ENCODE measurements at regions of chr5 and their contacts with region 1.

Region 1: GRCh38 chr5:138503487-138504270 is 38.4 kb downstream of the EGR1 start:
- DNase-seq: no peak
- H3K4me3 ChIP-seq: no peak overlapping the region
- H3K27me3 ChIP-seq: no peaks in the 10 kb centered on the region
- CTCF ChIP-seq: peak; percentile 79

Region 2: DNA sequence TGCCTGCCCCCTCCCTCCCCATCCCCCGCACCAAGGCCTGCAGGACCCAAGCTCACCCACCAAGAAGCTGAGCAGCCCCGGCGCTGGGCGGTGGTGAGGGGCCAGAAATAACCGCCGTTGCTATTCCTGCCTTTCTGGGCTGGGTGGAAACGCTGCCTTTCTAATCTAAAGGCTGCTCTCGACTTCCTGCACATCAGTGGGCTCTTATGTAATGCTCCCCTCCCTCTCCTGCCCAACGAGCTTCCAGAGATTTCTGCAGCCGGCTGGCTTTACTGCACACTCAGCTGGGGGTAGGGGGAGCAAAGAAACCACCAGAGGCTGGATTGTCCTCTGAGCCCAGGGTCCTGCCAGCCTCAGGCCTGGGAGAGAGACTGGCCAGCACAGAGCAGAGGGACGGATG is 45.3 kb before region 1 on chr5:
- CTCF ChIA-PET with region 1: interaction called, 123 read pairs
- POLR2A ChIA-PET with region 1: no interaction called
- DNase-seq: no peak
- H3K4me3 ChIP-seq: no peak overlapping the region
- H3K27me3 ChIP-seq: no peaks in the 10 kb centered on the region
- CTCF ChIP-seq: no peak

Region 3: DNA sequence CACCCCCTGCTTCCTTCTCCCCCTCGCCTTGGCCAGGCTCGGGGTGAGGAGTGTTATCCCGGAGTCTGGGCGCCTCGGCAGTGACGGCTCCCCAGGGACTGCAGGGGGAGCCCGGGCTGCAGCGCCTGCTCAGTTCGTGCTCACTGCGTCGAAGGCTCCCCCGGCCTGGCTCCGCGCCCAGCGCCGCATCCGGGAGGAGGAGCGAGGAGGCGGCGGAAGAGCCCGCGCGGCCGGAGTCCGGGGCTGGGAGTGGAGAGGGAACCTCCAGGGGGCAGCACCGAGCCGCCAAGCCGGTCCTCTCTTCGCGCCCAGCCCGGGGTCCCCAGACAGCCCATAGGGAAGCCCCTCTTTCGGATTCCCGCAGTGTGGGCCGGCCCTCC is 39.7 kb before region 1 on chr5:
- CTCF ChIA-PET with region 1: interaction called, 99 read pairs
- POLR2A ChIA-PET with region 1: no interaction called
- DNase-seq: peak; percentile 71
- H3K4me3 ChIP-seq: peak overlapping the region; percentile 84
- H3K27me3 ChIP-seq: no peaks in the 10 kb centered on the region
- CTCF ChIP-seq: peak; percentile 79

Region 4: GRCh38 chr5:138491669-138492559 is 11.8 kb before region 1 on chr5:
- CTCF ChIA-PET with region 1: interaction called, 41 read pairs
- POLR2A ChIA-PET with region 1: no interaction called
- DNase-seq: peak; percentile 61
- H3K4me3 ChIP-seq: peak overlapping the region; percentile 55
- H3K27me3 ChIP-seq: no peaks in the 10 kb centered on the region; the same call in 1 of the 2 replicates
- CTCF ChIP-seq: no peak

Region 5: GRCh38 chr5:138528208-138528607 is 24.5 kb after region 1 on chr5:
- CTCF ChIA-PET with region 1: interaction called, 11 read pairs
- POLR2A ChIA-PET with region 1: interaction called, 6 read pairs
- DNase-seq: no peak
- H3K4me3 ChIP-seq: no peak overlapping the region
- H3K27me3 ChIP-seq: no peaks in the 10 kb centered on the region
- CTCF ChIP-seq: no peak

Region 6: DNA sequence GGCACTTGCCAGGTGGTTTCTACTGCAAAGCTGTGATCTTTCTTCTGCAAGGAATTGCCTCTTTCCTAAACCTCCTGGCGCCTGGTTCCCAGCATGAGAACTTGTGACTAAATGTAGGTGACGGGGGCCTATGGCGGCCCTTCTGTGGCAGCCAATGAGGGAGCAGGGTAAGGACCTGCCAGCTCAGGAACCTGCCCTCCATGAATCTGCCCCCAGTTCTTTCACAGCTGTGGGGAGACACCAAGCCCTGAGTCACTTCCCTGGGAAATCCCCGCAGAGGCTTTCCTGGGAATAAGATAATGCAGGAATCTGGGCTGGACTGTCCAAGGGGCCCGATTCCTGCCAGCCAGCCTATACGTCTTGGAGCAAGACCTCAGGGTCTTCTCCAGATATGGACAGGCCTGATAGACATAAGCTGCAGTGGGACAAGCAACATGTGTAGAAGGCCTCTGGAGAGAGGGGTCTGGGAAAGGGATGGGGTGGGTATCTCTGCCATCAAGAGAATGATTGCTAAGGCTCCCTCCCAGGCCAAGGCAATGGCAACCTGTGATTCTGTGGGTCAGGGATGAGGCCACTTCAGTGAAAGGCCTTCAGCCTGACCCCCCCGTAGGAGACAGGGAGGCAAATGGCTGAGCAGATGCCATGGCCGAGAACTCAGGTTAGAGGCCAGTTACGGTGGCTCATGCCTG is 193.0 kb after region 1 on chr5:
- CTCF ChIA-PET with region 1: no interaction called
- POLR2A ChIA-PET with region 1: no interaction called
- DNase-seq: no peak
- H3K4me3 ChIP-seq: no peak overlapping the region
- H3K27me3 ChIP-seq: no peaks in the 10 kb centered on the region; the same call in 1 of the 2 replicates
- CTCF ChIP-seq: no peak